ENCODE measurements at regions of chr17 and their contacts with region 1.

Region 1: DNA sequence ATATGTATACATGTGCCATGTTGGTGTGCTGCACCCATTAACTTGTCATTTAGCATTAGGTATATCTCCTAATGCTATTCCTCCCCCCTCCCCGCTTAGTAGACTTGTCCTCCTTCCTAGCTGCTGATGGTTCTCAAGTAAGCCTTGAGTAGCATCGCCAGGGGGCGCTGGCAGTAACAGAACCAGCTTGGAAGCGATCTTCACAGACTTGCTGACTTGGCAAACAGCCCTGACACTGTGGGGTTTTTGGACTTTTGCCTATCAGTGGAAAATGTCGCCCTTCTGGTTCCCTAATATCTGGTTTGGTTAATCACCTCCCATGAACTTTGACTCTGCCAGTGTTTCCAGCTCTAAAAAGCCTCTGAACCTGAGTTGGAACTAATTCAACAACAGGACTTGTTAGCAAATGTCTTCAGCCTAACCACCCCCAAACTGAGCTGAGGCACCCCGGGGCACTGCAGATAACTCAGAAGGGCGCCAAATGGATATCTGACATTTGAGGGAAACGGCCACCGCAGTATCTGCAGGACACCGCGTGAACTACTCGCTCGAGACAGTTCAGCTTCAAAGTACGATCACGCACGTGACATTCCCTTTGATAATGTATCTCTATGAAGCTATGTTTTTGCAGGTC is 15.4 kb upstream of the SPATA32 start:
- DNase-seq: peak; percentile 86
- CTCF ChIP-seq: peak; percentile 82

Region 2: GRCh38 chr17:44804302-44805089 is 472.8 kb before region 1 on chr17:
- CTCF ChIA-PET with region 1: no interaction called
- POLR2A ChIA-PET with region 1: no interaction called
- DNase-seq: no peak
- CTCF ChIP-seq: no peak

Region 3: GRCh38 chr17:45190503-45191255 is 86.7 kb before region 1 on chr17:
- CTCF ChIA-PET with region 1: no interaction called
- POLR2A ChIA-PET with region 1: no interaction called
- DNase-seq: no peak
- CTCF ChIP-seq: no peak

Region 4: GRCh38 chr17:45218895-45219661 is 58.3 kb before region 1 on chr17:
- CTCF ChIA-PET with region 1: interaction called, 32 read pairs
- POLR2A ChIA-PET with region 1: interaction called, 3 read pairs
- DNase-seq: peak; percentile 74
- CTCF ChIP-seq: peak; percentile 94

Region 5: DNA sequence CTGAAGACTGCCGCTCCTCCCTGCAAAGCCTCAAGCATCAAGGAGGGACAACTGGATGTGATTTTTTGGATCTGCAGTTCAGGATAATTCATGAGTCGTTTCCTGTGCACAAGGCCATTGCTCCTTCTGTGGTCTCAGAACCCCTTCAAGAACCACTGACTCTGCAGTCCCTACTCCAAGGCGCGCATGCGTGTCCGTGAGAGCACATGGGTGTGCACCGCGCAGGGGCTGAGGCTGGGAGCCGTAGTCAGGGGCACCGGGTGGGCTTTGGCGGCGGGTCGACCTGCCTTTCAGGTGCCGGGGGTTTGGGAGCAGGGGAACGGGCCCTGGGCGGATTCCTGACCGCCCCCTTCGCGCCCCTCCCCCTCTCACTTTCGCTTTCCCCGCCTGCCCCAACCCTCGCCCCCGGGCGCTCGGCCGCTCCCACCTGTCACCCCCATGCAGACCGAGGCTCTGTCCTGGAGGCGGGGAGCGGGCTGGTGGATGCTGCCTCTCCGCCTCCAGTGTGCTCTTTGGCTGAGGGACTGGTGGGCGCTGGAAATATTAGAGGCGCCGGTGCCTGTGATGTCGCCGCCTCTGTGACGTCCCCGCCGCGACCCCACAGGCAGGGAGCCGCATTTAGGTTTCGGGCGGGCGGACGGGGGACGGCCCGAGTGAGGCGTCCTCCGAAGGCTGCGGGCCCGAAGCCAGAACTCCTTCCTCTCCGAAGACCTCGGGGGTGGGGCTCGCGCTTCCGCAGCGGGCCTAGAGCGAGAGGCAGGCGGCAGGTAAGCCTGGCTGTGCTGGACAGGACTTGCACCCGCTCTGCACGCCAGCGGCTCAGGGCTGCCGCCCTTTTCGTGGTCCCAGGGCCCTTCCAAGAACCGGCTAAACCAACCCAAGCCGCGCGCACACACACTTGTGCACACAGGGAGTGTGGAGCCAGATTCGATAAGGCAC is 15.5 kb before region 1 on chr17 and contains the start of gene SPATA32:
- CTCF ChIA-PET with region 1: interaction called, 26 read pairs
- POLR2A ChIA-PET with region 1: no interaction called
- DNase-seq: peak; percentile 81
- CTCF ChIP-seq: no peak

Region 6: GRCh38 chr17:45299339-45299738 is 22.0 kb after region 1 on chr17:
- CTCF ChIA-PET with region 1: interaction called, 40 read pairs
- POLR2A ChIA-PET with region 1: no interaction called
- DNase-seq: no peak
- CTCF ChIP-seq: no peak

Region 7: DNA sequence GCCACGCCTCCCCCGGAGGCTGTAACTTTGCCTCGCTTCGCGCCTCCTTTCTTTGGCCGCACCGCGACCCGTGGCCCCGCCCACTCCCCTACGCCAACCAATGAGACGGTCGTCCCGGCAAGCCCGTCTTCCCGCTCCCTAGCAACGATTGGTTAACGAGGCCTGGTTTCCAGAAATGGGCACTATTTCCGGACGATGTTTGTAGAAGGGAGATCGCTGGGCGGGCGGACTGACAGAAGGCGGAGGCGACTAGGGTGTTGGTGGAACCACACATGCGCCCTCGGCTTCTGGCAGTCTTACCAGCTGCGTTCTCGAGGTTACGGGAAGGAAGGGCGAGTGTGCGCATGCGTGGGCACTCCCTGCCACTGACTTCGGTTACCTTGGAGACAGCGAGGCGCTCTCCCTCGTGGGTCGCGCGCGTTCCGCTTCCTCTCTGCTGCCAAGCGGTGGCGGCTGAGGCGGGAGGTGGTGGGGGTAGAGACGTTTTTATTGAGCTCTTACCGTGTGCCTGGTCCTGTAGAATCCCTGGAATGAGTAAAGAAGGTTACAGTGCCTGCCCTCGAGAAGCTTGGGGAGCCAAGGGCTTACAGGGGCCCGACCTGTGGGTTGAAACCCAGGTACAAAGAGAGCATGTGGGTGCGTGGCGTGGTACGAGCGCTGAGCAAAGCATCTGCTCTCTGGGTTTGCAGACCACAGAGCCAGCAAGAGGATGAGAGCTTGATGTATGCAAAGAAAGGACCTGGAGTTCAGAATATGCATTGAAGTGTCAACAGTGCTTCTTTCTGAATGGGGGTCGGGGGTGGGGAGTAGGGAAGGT is 40.0 kb after region 1 on chr17:
- CTCF ChIA-PET with region 1: interaction called, 37 read pairs
- POLR2A ChIA-PET with region 1: interaction called, 3 read pairs
- DNase-seq: peak; percentile 98
- CTCF ChIP-seq: no peak

Region 8: DNA sequence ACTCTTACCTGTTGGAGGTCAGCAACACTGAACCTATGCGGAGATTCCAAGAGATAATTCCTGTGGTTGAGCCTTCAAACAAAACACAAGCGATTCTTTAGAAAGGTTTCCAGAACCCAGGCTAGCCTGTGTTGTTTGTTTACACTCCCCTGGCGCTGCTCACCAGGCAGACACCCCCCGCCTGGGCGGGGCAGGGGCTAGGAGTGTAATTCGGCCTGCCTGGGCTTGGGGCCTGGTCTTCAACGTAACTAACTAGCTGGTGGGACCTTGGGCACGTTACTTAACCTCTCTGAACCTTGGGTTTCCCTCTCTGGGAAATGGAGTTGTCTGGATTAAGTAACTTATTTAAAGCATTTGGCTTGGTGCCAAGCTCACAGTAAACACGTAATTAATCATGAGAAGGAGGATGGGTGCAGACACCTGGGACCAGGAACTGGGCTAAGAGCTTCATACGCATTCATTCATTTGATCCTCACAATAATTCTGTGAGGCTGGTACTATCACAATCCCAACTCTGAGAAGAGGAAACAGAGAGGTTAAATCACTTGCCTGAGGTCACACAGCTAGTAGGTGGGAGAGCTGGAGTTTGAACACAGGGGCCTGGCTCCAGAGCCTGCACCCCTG is 162.9 kb after region 1 on chr17:
- CTCF ChIA-PET with region 1: no interaction called
- POLR2A ChIA-PET with region 1: no interaction called
- DNase-seq: no peak
- CTCF ChIP-seq: no peak

Region 9: DNA sequence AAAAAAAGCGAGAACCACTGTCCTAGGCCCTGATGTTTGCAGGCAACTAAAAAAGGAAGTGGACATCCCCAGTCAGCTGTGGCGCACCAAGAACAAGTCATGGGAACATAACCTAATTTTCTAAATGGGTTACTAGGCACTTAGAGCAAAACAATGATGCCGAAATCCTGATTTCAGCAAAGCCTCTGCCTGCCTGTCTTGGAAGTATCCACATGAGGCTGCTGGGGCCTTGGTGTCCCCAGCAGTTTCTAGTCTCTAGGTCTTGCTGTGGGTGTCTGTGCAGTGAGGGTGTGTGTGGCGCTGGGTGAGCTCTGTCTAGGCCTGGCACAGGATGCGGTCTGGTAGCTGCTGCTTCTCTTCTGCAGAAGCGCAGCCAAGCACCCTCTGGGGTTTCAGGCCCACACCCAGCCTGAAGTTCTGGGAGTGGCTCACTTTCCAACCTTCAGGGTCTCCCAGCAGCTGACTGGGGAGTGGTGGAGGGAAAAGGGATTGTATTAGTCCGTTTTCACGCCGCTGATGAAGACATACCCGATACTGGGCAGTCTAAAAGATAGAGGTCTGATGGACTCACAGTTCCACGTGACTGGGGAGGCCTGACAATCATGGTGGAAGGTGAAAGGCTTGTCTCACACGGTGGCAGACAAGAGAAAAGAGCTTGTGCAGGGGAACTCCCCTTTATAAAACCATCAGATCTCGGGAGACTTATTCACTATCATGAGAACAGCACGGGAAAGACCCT is 742.9 kb after region 1 on chr17:
- CTCF ChIA-PET with region 1: no interaction called
- POLR2A ChIA-PET with region 1: no interaction called
- DNase-seq: peak; percentile 61
- CTCF ChIP-seq: no peak

Measured in GM10248 (cell line).